GM12878 (cell line): ENCODE measurements at regions of chr17 and their contacts with region 1.

Region 1: GRCh38 chr17:43940630-43941029 is 1.6 kb downstream of the PPY start:
- DNase-seq: no peak
- ATAC-seq: peak; percentile 50
- H3K4me3 ChIP-seq: no peak overlapping the region
- H3K27ac ChIP-seq: no peak overlapping the region
- H3K4me1 ChIP-seq: no peaks in the 10 kb centered on the region
- H3K27me3 ChIP-seq: no peaks in the 10 kb centered on the region; a peak in 1 of 4 replicates
- CTCF ChIP-seq: peak; percentile 37 to 59 (median 43); a peak in 5 of 6 replicates
- EP300 ChIP-seq: no peak
- POLR2A ChIP-seq: no peak
- RAD21 ChIP-seq: peak; percentile 41

Region 2: DNA sequence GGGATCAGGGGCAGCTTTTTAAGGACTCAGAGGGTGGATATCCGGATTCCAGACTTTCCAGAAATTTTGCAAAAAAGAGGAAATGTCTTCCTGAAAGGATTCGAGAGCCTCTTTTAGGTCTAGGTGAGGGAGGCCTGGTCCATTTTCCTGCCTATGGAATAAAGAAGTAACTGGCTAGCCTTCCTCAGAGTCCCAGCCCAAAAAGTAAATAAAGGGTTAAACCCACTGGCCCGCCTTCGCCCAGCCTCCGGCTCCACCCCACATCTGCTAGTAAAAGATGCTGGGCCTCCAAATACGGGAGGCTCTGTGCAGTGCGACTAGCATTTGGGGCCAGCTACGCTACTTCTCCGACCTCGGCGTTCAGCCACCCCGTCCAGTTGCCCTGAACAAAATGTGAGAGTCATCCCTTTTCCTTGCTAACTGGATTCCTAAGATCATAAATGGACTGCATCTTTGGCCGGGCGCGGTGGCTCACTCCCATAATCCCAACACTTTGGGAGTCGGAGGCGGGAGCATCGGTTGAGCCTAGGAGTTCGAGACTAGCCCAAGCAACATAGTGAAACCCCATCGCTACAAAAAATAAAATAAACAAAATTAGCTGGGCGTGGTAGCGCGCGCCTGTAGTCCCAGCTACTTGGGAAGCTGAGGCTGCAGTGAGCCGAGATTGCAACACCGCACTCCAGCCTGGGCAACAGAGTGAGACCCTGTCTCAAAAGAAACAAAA is 32.5 kb before region 1 on chr17:
- CTCF ChIA-PET with region 1: interaction called, 21 read pairs
- POLR2A ChIA-PET with region 1: no interaction called
- RAD21 ChIA-PET with region 1: interaction called, 6 read pairs
- SMC1A ChIA-PET with region 1: interaction called, 3 read pairs
- in situ Hi-C with region 1: no loop called
- intact Hi-C with region 1: no loop called
- DNase-seq: no peak
- ATAC-seq: peak; percentile 50
- H3K4me3 ChIP-seq: no peak overlapping the region
- H3K27ac ChIP-seq: no peak overlapping the region
- H3K4me1 ChIP-seq: no peaks in the 10 kb centered on the region
- H3K27me3 ChIP-seq: peaks cover 10 to 18% of the 10 kb centered on the region in 2 experiments
- CTCF ChIP-seq: no peak
- EP300 ChIP-seq: no peak
- POLR2A ChIP-seq: no peak
- RAD21 ChIP-seq: no peak

Region 3: GRCh38 chr17:43914451-43914850 is 26.2 kb before region 1 on chr17:
- CTCF ChIA-PET with region 1: interaction called, 21 read pairs
- POLR2A ChIA-PET with region 1: no interaction called
- RAD21 ChIA-PET with region 1: interaction called, 6 read pairs
- SMC1A ChIA-PET with region 1: interaction called, 4 read pairs
- in situ Hi-C with region 1: no loop called
- intact Hi-C with region 1: no loop called
- DNase-seq: no peak
- ATAC-seq: no peak
- H3K4me3 ChIP-seq: no peak overlapping the region
- H3K27ac ChIP-seq: no peak overlapping the region
- H3K4me1 ChIP-seq: peaks cover 8% of the 10 kb centered on the region
- H3K27me3 ChIP-seq: no peaks in the 10 kb centered on the region
- CTCF ChIP-seq: no peak
- EP300 ChIP-seq: no peak
- POLR2A ChIP-seq: no peak
- RAD21 ChIP-seq: no peak

Region 4: GRCh38 chr17:43994272-43995149 is 53.9 kb after region 1 on chr17:
- CTCF ChIA-PET with region 1: interaction called, 42 read pairs
- POLR2A ChIA-PET with region 1: no interaction called
- RAD21 ChIA-PET with region 1: interaction called, 10 read pairs
- SMC1A ChIA-PET with region 1: interaction called, 6 read pairs
- in situ Hi-C with region 1: loop called (anchors 5 kb)
- intact Hi-C with region 1: loop called (anchors 1 kb)
- DNase-seq: no peak
- ATAC-seq: peak; percentile 94
- H3K4me3 ChIP-seq: no peak overlapping the region
- H3K27ac ChIP-seq: no peak overlapping the region
- H3K4me1 ChIP-seq: no peaks in the 10 kb centered on the region
- H3K27me3 ChIP-seq: peaks cover 4 to 6% of the 10 kb centered on the region in 2 experiments; a peak in 3 of 4 replicates
- CTCF ChIP-seq: peak; percentile 68 to 80 (median 80)
- EP300 ChIP-seq: no peak
- POLR2A ChIP-seq: no peak
- RAD21 ChIP-seq: peak; percentile 85

Region 5: GRCh38 chr17:44807817-44808155 is 867.2 kb after region 1 on chr17:
- CTCF ChIA-PET with region 1: no interaction called
- POLR2A ChIA-PET with region 1: no interaction called
- RAD21 ChIA-PET with region 1: no interaction called
- SMC1A ChIA-PET with region 1: no interaction called
- in situ Hi-C with region 1: no loop called
- intact Hi-C with region 1: no loop called
- DNase-seq: no peak
- ATAC-seq: peak; percentile 37
- H3K4me3 ChIP-seq: no peak overlapping the region
- H3K27ac ChIP-seq: no peak overlapping the region
- H3K4me1 ChIP-seq: no peaks in the 10 kb centered on the region
- H3K27me3 ChIP-seq: no peaks in the 10 kb centered on the region
- CTCF ChIP-seq: no peak
- EP300 ChIP-seq: no peak
- POLR2A ChIP-seq: no peak
- RAD21 ChIP-seq: no peak